Activated B cell treated with CpG ODN at 0.5 μM for 24 hours (primary cell): ENCODE measurements at regions of chr17 and their contacts with region 1.

Region 1: DNA sequence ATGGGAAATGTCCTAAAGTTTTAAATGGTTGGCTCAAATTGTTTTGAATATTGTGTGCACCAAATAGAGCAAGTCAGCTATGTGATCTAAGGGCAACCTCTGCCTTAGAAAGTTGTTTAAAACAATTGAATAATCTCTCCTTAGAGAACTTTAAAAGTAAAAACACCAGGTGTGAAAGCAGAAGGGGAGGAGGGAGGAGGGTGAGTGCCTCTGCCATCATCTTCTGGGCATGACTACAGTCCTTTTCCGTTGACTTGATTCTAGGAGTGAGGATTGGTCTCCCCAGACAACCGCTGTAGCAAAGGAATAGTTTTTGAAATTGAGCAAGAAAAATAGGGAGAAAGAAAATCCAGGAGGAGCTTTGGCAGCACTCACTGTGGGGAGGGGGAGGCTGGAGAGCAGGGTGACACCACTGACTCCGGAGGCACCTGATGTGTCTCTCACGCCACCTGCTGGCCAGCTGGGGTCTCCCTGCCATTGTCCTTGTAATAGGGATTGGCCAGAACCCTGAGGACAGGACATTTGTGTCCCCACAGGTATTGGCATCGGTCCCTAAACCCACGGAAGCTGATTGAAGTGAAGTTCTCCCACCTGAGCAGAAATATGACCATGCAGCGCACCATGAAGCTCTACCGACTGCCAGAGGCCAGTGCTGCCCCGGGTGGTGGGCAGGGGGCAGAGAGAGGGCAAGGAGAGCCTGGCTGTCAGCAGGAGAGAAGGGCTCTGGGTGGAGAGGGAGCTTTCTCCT is 33.3 kb downstream of the PLCD3 start:
- DNase-seq: peak; percentile 67
- ATAC-seq: peak; percentile 90
- H3K4me3 Mint-ChIP-seq: no peak overlapping the region
- H3K27ac Mint-ChIP-seq: no peak overlapping the region
- H3K4me1 Mint-ChIP-seq: peaks cover 8% of the 10 kb centered on the region
- H3K27me3 Mint-ChIP-seq: no peaks in the 10 kb centered on the region
- CTCF ChIP-seq: no peak

Region 2: DNA sequence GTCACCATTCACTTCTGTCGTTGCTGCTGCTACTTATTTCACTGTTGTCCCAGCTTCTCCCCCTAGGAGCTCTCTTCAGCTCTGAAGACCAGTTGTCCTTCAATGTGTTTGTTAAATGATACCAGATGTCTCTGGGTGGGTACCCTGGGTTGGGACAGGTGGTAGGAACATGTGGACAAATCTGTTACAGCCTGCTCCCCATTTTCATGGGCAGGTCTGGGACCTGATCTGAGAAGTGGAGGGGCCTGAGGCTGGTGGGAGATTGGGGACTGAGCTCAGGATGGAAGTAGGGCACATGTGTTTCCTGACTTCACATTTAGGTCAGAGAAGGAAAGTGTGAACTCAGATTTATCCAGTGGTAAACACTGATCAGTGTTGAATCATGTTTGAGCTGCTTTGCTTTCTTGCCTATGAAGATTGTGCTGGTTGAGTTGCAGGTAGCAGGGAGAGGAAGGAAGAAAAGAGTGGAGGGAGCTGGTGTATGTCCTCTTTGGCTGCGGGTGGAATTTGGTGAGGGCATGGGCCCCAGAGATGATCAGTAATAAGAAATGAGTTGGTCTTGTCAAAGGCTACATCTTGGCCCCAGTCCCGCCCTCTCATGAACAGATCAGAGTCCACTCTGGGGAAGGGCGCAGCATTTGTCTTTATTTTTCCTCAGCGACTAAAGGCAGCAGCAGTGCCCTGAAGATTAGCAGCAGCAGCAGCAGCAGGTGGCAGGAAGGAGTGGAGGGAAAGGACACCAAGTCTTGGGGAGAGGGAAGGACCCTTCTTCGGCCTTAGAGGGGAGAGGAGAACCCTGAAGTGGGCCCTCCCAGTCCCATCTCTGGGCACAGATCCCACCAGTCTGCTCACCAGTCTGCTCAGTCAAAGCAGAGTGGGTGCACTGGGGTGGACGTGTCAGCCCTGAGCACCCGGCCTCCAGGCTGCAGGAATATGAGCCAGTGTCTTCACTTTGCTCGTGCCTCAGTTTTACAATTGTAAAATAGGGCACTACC is 193.7 kb before region 1 on chr17:
- CTCF ChIA-PET with region 1: interaction called, 3 read pairs
- POLR2A ChIA-PET with region 1: interaction called, 12 read pairs
- intact Hi-C with region 1: no loop called
- DNase-seq: no peak
- ATAC-seq: no peak
- H3K4me3 Mint-ChIP-seq: no peak overlapping the region
- H3K27ac Mint-ChIP-seq: no peak overlapping the region
- H3K4me1 Mint-ChIP-seq: peaks cover 2% of the 10 kb centered on the region
- H3K27me3 Mint-ChIP-seq: peaks cover 4% of the 10 kb centered on the region
- CTCF ChIP-seq: no peak

Region 3: GRCh38 chr17:44919885-44920564 is 179.0 kb before region 1 on chr17:
- CTCF ChIA-PET with region 1: interaction called, 29 read pairs
- POLR2A ChIA-PET with region 1: interaction called, 3 read pairs
- intact Hi-C with region 1: loop called (anchors 1 kb)
- DNase-seq: peak; percentile 42
- ATAC-seq: peak; percentile 94
- H3K4me3 Mint-ChIP-seq: no peak overlapping the region
- H3K27ac Mint-ChIP-seq: no peak overlapping the region
- H3K4me1 Mint-ChIP-seq: peaks cover 15% of the 10 kb centered on the region
- H3K27me3 Mint-ChIP-seq: peaks cover 15% of the 10 kb centered on the region
- CTCF ChIP-seq: peak; percentile 29

Region 4: GRCh38 chr17:44968226-44969143 is 130.6 kb before region 1 on chr17 and contains the start of gene C1QL1:
- CTCF ChIA-PET with region 1: interaction called, 3 read pairs
- POLR2A ChIA-PET with region 1: no interaction called
- intact Hi-C with region 1: loop called (anchors 5 kb)
- DNase-seq: peak; percentile 82
- ATAC-seq: peak; percentile 98
- H3K4me3 Mint-ChIP-seq: peak within 1 kb of the TSS; percentile 78
- H3K27ac Mint-ChIP-seq: no peak within 1 kb of the TSS
- H3K4me1 Mint-ChIP-seq: peaks cover 37% of the 10 kb centered on the region
- H3K27me3 Mint-ChIP-seq: peaks cover 44% of the 10 kb centered on the region
- CTCF ChIP-seq: no peak
- total RNA-seq, gene C1QL1: not detected in 2 replicates

Region 5: GRCh38 chr17:45021607-45022287 is 77.3 kb before region 1 on chr17:
- CTCF ChIA-PET with region 1: interaction called, 3 read pairs
- POLR2A ChIA-PET with region 1: no interaction called
- intact Hi-C with region 1: loop called (anchors 2 kb)
- DNase-seq: peak; percentile 65
- ATAC-seq: peak; percentile 86
- H3K4me3 Mint-ChIP-seq: peak overlapping the region; percentile 39
- H3K27ac Mint-ChIP-seq: no peak overlapping the region
- H3K4me1 Mint-ChIP-seq: peaks cover 32% of the 10 kb centered on the region
- H3K27me3 Mint-ChIP-seq: peaks cover 37% of the 10 kb centered on the region
- CTCF ChIP-seq: no peak

Region 6: DNA sequence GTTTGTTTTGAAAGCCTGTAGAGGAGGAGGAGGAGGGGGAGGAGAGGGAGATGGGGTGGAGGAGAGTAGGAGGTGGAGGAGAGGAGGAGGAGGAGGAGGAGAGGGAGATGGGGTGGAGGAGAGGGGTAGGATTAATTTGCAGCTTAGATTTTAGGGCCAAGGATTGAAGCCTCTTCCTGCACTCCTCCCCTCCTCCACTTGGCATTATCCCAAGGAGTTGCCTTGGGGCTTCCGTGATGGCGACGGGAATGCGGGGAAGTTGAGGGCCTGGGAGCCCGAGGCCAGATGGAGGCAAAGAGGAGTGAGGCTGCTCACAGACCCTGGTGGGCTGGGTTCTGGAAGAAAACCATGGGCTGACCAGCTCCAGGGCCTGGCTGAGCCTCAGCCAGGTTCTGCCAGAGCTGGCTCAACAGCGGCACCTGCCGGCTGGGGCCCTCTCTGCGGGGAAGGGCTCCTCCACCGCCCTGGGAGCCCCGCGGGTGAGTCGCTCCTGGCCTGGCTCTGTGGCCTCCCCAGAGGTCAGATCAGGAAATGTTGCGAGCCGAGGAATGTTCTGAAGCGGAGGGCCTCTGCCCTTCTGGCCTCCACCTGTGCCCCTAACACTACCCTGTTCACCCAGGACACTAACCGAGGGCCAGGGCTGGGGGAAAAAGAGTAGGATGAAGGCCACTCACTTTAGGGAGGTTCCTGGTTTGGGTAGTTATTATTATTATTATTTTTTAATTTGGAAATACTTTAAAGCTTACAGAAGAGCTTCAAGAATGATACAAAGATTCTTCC is 98.7 kb after region 1 on chr17:
- CTCF ChIA-PET with region 1: interaction called, 8 read pairs
- POLR2A ChIA-PET with region 1: no interaction called
- intact Hi-C with region 1: loop called (anchors 1 kb)
- DNase-seq: peak; percentile 91
- ATAC-seq: peak; percentile 100
- H3K4me3 Mint-ChIP-seq: no peak overlapping the region
- H3K27ac Mint-ChIP-seq: no peak overlapping the region
- H3K4me1 Mint-ChIP-seq: peaks cover 4% of the 10 kb centered on the region
- H3K27me3 Mint-ChIP-seq: no peaks in the 10 kb centered on the region
- CTCF ChIP-seq: no peak